Gastrocnemius medialis (tissue), 4 donors: ENCODE measurements at regions of chr3 and their contacts with region 1.

Region 1: GRCh38 chr3:163951397-163951987 is 1126.8 kb downstream of the SI start:
- DNase-seq: no peak
- ATAC-seq: no peak
- H3K4me3 ChIP-seq: no peak overlapping the region
- H3K27ac ChIP-seq: no peak overlapping the region
- H3K4me1 ChIP-seq: no peaks in the 10 kb centered on the region
- H3K27me3 ChIP-seq: no peaks in the 10 kb centered on the region
- CTCF ChIP-seq: no peak
- POLR2A ChIP-seq: no peak

Region 2: DNA sequence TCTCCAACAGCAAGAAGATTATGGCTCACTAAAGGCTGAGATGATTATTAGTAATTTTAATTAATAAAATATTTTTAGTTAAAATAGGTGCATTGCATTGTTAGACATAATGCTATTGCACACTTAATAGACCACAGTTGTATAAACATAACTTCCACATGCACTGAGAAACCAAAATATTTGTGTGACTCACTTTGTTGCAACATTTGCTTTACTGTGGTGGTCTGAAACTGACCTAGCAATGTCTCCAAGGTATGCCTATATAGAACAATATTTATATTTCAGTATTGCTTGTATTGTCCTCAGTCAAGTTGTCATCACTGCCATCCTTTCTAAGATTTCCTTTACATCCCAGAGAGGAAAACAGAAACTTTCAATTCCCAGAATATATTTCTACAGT is 88.3 kb before region 1 on chr3:
- in situ Hi-C with region 1: loop called in 1 of 4 experiments (anchors 25 kb)
- intact Hi-C with region 1: no loop called
- DNase-seq: no peak
- ATAC-seq: no peak
- H3K4me3 ChIP-seq: no peak overlapping the region
- H3K27ac ChIP-seq: no peak overlapping the region
- H3K4me1 ChIP-seq: no peaks in the 10 kb centered on the region
- H3K27me3 ChIP-seq: no peaks in the 10 kb centered on the region
- CTCF ChIP-seq: no peak
- POLR2A ChIP-seq: no peak

Region 3: GRCh38 chr3:163983948-163984347 is 32.5 kb after region 1 on chr3:
- in situ Hi-C with region 1: no loop called
- intact Hi-C with region 1: no loop called
- DNase-seq: no peak
- ATAC-seq: no peak
- H3K4me3 ChIP-seq: no peak overlapping the region
- H3K27ac ChIP-seq: no peak overlapping the region
- H3K4me1 ChIP-seq: no peaks in the 10 kb centered on the region
- H3K27me3 ChIP-seq: no peaks in the 10 kb centered on the region
- CTCF ChIP-seq: no peak
- POLR2A ChIP-seq: no peak

Region 4: DNA sequence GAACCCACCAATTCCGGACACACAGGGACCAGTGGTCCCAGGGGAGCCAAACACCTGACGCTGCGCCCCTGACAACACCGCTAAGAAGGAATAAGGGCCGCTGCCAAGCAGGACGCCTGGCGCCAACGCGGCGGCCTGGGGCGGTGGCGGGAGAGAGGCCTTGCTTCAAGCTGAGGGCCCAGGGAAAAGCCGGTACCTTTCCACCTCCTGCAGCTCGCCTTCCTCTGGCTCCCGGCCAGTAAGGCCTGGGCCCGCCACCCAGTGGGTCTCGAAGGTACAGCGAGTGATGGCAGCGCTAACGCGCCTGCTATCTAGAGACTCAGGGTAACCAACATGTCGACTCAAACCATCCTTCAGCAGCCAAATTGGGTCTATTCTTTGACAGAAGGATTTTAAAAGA is 52.7 kb after region 1 on chr3:
- in situ Hi-C with region 1: no loop called
- intact Hi-C with region 1: no loop called
- DNase-seq: no peak
- ATAC-seq: no peak
- H3K4me3 ChIP-seq: no peak overlapping the region
- H3K27ac ChIP-seq: no peak overlapping the region
- H3K4me1 ChIP-seq: no peaks in the 10 kb centered on the region
- H3K27me3 ChIP-seq: no peaks in the 10 kb centered on the region
- CTCF ChIP-seq: no peak
- POLR2A ChIP-seq: no peak

Region 5: DNA sequence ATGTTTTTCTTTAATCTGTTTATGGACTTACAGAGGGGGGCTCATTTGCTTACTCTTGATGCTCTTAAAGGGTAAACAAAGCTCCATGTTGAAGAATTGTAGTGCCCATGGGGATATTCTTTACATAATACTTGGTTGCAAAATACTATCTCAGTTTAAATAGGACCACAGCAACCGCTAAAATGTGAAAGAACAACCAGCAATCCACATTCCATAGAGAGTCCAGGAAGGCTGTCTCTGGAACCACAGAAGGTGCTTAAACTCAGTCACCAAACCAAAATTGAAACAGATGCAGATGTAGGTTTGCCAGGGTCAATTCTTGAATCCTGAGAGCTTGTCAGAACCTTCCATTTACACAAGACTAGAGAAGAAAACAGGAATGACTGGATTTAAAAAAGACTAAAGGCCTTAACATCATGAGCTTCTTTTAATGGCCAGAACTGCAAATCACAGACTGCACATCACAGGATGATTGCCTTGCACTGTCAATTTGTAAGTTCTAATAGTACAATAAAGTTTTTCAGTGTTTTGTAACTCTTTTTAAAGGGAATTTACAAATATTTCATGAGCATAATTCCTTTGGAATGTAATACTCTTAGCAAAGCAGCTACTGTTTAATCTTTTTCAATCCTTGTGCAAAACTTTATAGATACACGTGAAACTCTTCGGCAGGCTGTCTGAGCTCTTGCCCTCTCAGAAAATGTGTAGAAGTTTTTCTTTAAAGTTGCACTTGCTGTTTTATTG is 465.2 kb after region 1 on chr3:
- in situ Hi-C with region 1: no loop called
- intact Hi-C with region 1: no loop called
- DNase-seq: no peak
- ATAC-seq: no peak
- H3K4me3 ChIP-seq: no peak overlapping the region
- H3K27ac ChIP-seq: no peak overlapping the region
- H3K4me1 ChIP-seq: no peaks in the 10 kb centered on the region
- H3K27me3 ChIP-seq: no peaks in the 10 kb centered on the region
- CTCF ChIP-seq: no peak
- POLR2A ChIP-seq: no peak